ENCODE measurements at regions of chr16 and their contacts with region 1.

Region 1: GRCh38 chr16:56708525-56709442 is 21.1 kb upstream of the NUP93 start:
- DNase-seq: no peak
- ATAC-seq: no peak

Region 2: GRCh38 chr16:56332464-56333079 is 376.2 kb before region 1 on chr16:
- intact Hi-C with region 1: loop called (anchors 10 kb)
- DNase-seq: peak; percentile 77
- ATAC-seq: peak; percentile 80

Region 3: GRCh38 chr16:56532714-56533113 is 176.1 kb before region 1 on chr16:
- intact Hi-C with region 1: no loop called
- DNase-seq: no peak
- ATAC-seq: no peak

Region 4: DNA sequence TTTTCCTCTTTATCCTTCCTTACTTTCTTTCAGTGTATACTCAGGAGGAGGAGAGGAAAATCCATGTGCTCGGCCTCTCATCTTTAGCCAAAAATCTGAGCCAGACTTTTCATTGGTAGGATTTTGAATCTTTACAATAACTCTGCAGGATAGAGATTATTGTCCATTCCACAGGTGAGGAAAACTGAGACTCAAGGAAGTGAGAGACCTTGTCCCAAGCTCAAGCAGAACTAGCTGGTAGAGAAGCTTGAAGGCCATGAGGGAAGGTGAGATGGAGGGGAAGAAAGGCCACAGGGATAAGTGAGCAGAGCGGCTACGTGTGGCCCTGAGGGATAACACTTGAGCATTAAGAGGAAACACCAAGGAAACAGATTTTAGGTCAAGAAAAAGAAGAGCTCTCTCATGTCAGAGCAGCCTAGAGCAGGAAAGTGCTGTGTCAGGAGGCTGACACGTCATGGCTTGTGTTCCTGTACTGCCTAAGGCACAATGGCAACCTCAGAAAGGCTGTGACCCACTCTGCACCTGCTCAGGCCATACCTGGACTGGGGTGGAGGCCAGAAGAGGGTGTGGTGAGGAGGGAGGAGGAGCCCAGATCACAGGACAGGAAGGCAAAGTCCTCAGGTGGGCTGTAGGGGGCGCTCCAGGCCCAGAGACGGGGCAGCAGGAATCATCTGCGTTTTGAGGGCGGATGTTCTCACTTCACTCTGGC is 132.0 kb before region 1 on chr16:
- intact Hi-C with region 1: loop called (anchors 10 kb)
- DNase-seq: peak; percentile 83
- ATAC-seq: peak; percentile 90

Region 5: DNA sequence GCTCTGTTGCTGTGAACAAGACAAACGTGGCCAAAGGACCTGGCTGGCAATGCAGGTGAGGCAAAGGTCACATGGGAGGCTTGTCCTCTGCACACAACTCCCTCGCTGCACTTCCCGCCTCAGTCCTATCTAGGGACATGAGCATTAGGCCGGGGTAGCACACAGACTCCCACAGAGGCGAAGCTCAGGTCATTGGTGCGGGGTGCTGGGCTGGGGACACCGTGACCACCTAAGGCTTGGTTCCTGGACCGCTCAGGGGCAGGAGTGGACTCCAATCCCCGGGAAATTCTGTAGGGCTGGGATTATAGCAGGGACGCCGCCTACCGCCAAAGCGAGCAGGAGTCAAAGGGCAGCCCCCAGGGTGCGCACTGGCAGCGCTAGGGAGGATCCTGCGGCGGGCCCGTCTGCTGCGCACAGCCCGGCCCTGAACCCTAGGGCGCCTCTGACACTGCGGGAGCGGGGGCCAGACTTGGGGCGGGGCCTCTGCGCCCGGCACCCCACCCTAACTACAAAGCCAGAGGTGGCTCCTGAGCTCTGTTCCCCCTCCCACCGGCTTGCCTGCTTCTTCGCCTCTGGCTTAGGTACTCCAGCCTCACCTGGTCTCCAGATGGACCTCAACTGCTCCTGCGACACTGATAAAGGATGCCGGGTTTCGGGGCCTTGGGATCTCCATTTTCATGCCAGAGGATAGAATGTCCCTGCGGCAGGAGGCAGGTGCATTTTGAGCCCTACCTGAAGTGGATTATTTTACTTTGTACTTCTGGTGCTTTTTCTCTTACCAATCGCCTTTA is 60.9 kb before region 1 on chr16:
- intact Hi-C with region 1: no loop called
- DNase-seq: no peak
- ATAC-seq: no peak